BJ (cell line): ENCODE measurements at regions of chr3 and their contacts with region 1.

Region 1: GRCh38 chr3:61561374-61562041 is at the start of gene PTPRG:
- DNase-seq: peak; percentile 66
- H3K4me3 ChIP-seq: peak within 1 kb of the TSS; percentile 69
- H3K27me3 ChIP-seq: no peaks in the 10 kb centered on the region; the same call in 1 of the 2 replicates
- CTCF ChIP-seq: no peak
- polyA plus RNA-seq, gene PTPRG: 20.8 and 21.5 TPM in 2 replicates

Region 2: GRCh38 chr3:59764171-59764570 is 1797.3 kb before region 1 on chr3:
- CTCF ChIA-PET with region 1: no interaction called
- POLR2A ChIA-PET with region 1: interaction called, 15 read pairs
- DNase-seq: no peak
- H3K4me3 ChIP-seq: no peak overlapping the region
- H3K27me3 ChIP-seq: no peaks in the 10 kb centered on the region
- CTCF ChIP-seq: no peak

Region 3: GRCh38 chr3:61574854-61575253 is 13.3 kb after region 1 on chr3:
- CTCF ChIA-PET with region 1: interaction called, 25 read pairs
- POLR2A ChIA-PET with region 1: no interaction called
- DNase-seq: peak; percentile 98
- H3K4me3 ChIP-seq: no peak overlapping the region
- H3K27me3 ChIP-seq: no peaks in the 10 kb centered on the region
- CTCF ChIP-seq: no peak

Region 4: GRCh38 chr3:61699622-61700021 is 138.1 kb after region 1 on chr3:
- CTCF ChIA-PET with region 1: interaction called, 3 read pairs
- POLR2A ChIA-PET with region 1: interaction called, 10 read pairs
- DNase-seq: no peak
- H3K4me3 ChIP-seq: no peak overlapping the region
- H3K27me3 ChIP-seq: no peaks in the 10 kb centered on the region
- CTCF ChIP-seq: no peak

Region 5: GRCh38 chr3:62188681-62189383 is 627.3 kb after region 1 on chr3:
- CTCF ChIA-PET with region 1: interaction called, 35 read pairs
- POLR2A ChIA-PET with region 1: interaction called, 20 read pairs
- DNase-seq: peak; percentile 16
- H3K4me3 ChIP-seq: no peak overlapping the region
- H3K27me3 ChIP-seq: no peaks in the 10 kb centered on the region
- CTCF ChIP-seq: peak; percentile 75